ENCODE measurements at regions of chr3 and their contacts with region 1.

Region 1: DNA sequence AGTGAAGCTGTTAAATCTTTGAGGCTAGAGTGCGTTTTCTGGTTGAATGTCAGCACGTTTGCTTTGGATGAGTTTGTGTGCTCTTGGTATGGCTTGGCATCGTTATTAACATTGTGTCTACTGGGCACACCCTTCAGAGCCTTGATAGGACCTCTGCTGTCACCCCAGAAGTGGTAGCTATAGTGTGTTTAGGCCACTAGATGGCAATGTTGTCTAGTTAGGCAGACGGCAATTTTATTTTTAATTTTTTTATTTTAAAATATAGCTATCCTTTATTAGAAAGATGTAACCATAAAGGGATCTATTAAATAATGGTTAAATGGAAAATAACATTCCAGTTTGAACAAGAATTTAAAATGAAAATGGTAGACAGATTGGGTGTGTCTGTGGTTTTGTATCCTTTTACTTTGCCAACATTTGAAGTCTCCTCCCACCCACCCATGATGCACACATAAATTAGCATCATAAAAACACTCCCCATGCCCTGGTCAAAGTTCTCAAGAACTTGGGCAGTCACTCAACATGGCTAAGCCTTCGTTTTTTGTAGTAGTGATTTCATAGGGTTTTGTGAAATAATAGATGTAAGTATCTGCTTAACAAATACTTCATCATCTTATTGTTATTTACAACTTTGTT is 200.7 kb downstream of the KCNH8 start:
- DNase-seq: peak in 2 of 5 donors; percentile 1 to 14
- H3K4me3 ChIP-seq: no peak overlapping the region
- H3K4me3 Mint-ChIP-seq: no peak overlapping the region
- H3K27ac ChIP-seq: no peak overlapping the region
- H3K27ac Mint-ChIP-seq: no peak overlapping the region
- H3K4me1 ChIP-seq: no peaks in the 10 kb centered on the region
- H3K4me1 Mint-ChIP-seq: peaks cover 0 to 2% (median 0%) of the 10 kb centered on the region in 4 donors
- H3K27me3 ChIP-seq: no peaks in the 10 kb centered on the region
- H3K27me3 Mint-ChIP-seq: peaks cover 0 to 1% of the 10 kb centered on the region in 2 donors

Region 2: GRCh38 chr3:19065027-19065426 is 284.0 kb before region 1 on chr3:
- CTCF ChIA-PET with region 1: no interaction called
- POLR2A ChIA-PET with region 1: no interaction called
- intact Hi-C with region 1: loop called (anchors 5 kb)
- DNase-seq: peak in 2 of 5 donors; percentile 1 to 20
- H3K4me3 ChIP-seq: no peak overlapping the region
- H3K4me3 Mint-ChIP-seq: no peak overlapping the region
- H3K27ac ChIP-seq: no peak overlapping the region
- H3K27ac Mint-ChIP-seq: no peak overlapping the region
- H3K4me1 ChIP-seq: no peaks in the 10 kb centered on the region
- H3K4me1 Mint-ChIP-seq: no peaks in the 10 kb centered on the region
- H3K27me3 ChIP-seq: no peaks in the 10 kb centered on the region
- H3K27me3 Mint-ChIP-seq: no peaks in the 10 kb centered on the region

Region 3: GRCh38 chr3:19272296-19272695 is 76.8 kb before region 1 on chr3:
- CTCF ChIA-PET with region 1: no interaction called
- POLR2A ChIA-PET with region 1: no interaction called
- intact Hi-C with region 1: no loop called
- DNase-seq: no peak
- H3K4me3 ChIP-seq: no peak overlapping the region
- H3K4me3 Mint-ChIP-seq: no peak overlapping the region
- H3K27ac ChIP-seq: no peak overlapping the region
- H3K27ac Mint-ChIP-seq: no peak overlapping the region
- H3K4me1 ChIP-seq: no peaks in the 10 kb centered on the region
- H3K4me1 Mint-ChIP-seq: no peaks in the 10 kb centered on the region
- H3K27me3 ChIP-seq: no peaks in the 10 kb centered on the region
- H3K27me3 Mint-ChIP-seq: no peaks in the 10 kb centered on the region

Region 4: DNA sequence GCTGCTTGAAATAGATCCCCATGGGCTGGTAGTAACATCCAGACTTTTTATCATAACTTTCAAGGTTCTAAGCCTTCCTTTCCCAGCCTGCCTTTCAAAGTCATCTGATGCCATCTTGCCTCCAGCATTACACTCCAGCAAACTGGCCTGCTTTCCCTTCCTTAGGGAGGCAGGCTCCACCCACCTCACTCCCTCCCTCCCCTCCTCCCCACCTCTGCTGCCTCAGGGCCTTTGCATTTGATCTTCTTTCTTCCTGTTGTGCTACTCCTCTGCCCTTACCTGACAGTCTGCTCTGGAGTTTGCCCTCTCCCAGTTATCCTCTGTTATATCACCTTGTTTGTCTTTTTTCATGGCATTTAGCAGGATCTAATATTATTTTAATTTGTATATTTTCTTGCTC is 118.7 kb after region 1 on chr3:
- CTCF ChIA-PET with region 1: no interaction called
- POLR2A ChIA-PET with region 1: no interaction called
- intact Hi-C with region 1: no loop called
- DNase-seq: no peak
- H3K4me3 ChIP-seq: no peak overlapping the region
- H3K4me3 Mint-ChIP-seq: no peak overlapping the region
- H3K27ac ChIP-seq: no peak overlapping the region
- H3K27ac Mint-ChIP-seq: no peak overlapping the region
- H3K4me1 ChIP-seq: no peaks in the 10 kb centered on the region
- H3K4me1 Mint-ChIP-seq: no peaks in the 10 kb centered on the region
- H3K27me3 ChIP-seq: no peaks in the 10 kb centered on the region
- H3K27me3 Mint-ChIP-seq: no peaks in the 10 kb centered on the region